ENCODE measurements at regions of chr10 and their contacts with region 1.

Region 1: GRCh38 chr10:5446390-5446926 is 34.1 kb downstream of the NET1 start:
- DNase-seq: peak; percentile 89
- ATAC-seq: peak; percentile 95
- H3K4me3 ChIP-seq: peak overlapping the region; percentile 74 to 96 (median 77)
- H3K27ac ChIP-seq: peak overlapping the region; percentile 71
- H3K4me1 ChIP-seq: peaks cover 18% of the 10 kb centered on the region
- H3K27me3 ChIP-seq: no peaks in the 10 kb centered on the region; a peak in 1 of 5 replicates
- CTCF ChIP-seq: peak; percentile 35; the same call in 1 of the 2 replicates
- EP300 ChIP-seq: peak in 1 of 2 experiments; percentile 28; a peak in 1 of 4 replicates
- POLR2A ChIP-seq: peak; percentile 98 to 100
- RAD21 ChIP-seq: peak; percentile 63

Region 2: DNA sequence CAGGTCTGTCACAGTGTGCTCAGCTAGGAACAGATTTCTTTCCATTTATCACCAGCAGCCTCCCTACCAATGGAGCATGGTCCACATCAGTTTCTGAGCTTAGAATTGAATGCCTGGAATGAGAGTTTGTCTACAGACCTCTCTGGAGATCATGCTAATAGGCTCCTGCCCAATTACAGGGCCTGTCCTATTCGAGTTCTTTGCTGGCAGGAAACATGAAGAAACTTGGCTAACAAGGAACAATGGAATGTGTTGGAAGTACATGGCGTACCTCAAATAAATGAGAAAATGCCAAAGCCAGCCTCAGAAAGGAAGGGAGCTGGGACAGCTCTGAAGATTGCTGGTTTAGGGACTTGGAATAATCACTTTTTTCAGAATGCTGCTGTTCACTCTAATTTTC is 806.5 kb before region 1 on chr10:
- CTCF ChIA-PET with region 1: no interaction called
- POLR2A ChIA-PET with region 1: no interaction called
- in situ Hi-C with region 1: no loop called
- intact Hi-C with region 1: no loop called
- DNase-seq: no peak
- ATAC-seq: no peak
- H3K4me3 ChIP-seq: no peak overlapping the region
- H3K27ac ChIP-seq: no peak overlapping the region
- H3K4me1 ChIP-seq: no peaks in the 10 kb centered on the region
- H3K27me3 ChIP-seq: 0 out of 5 replicates have a peak, but pooled peaks cover 0 to 3% of the 10 kb centered on the region in 2 experiments
- CTCF ChIP-seq: no peak
- EP300 ChIP-seq: no peak
- POLR2A ChIP-seq: no peak
- RAD21 ChIP-seq: no peak

Region 3: GRCh38 chr10:5364890-5365338 is 81.5 kb before region 1 on chr10 and contains the start of gene UCN3:
- CTCF ChIA-PET with region 1: no interaction called
- POLR2A ChIA-PET with region 1: no interaction called
- in situ Hi-C with region 1: no loop called
- intact Hi-C with region 1: no loop called
- DNase-seq: no peak
- ATAC-seq: peak; percentile 71
- H3K4me3 ChIP-seq: peak within 1 kb of the TSS in 2 of 3 experiments; percentile 29 to 57; a peak in 4 of 6 replicates
- H3K27ac ChIP-seq: no peak within 1 kb of the TSS
- H3K4me1 ChIP-seq: peaks cover 24% of the 10 kb centered on the region
- H3K27me3 ChIP-seq: peaks cover 0 to 54% of the 10 kb centered on the region in 2 experiments
- CTCF ChIP-seq: peak; percentile 29; the same call in 1 of the 2 replicates
- EP300 ChIP-seq: no peak
- POLR2A ChIP-seq: no peak
- RAD21 ChIP-seq: no peak
- total RNA-seq, gene UCN3: not detected in 2 replicates

Region 4: GRCh38 chr10:5518138-5518537 is 71.7 kb after region 1 on chr10:
- CTCF ChIA-PET with region 1: no interaction called
- POLR2A ChIA-PET with region 1: interaction called, 18 read pairs
- in situ Hi-C with region 1: no loop called
- intact Hi-C with region 1: loop called (anchors 10 kb)
- DNase-seq: peak; percentile 84
- ATAC-seq: peak; percentile 86
- H3K4me3 ChIP-seq: 0 out of 6 replicates have a peak overlapping the region, but pooled peaks of 1 of the 3 experiments have one; percentile 4
- H3K27ac ChIP-seq: peak overlapping the region; percentile 45
- H3K4me1 ChIP-seq: peaks cover 66% of the 10 kb centered on the region
- H3K27me3 ChIP-seq: no peaks in the 10 kb centered on the region
- CTCF ChIP-seq: no peak
- EP300 ChIP-seq: peak in 1 of 2 experiments; percentile 68; a peak in 2 of 4 replicates
- POLR2A ChIP-seq: no peak
- RAD21 ChIP-seq: no peak

Region 5: DNA sequence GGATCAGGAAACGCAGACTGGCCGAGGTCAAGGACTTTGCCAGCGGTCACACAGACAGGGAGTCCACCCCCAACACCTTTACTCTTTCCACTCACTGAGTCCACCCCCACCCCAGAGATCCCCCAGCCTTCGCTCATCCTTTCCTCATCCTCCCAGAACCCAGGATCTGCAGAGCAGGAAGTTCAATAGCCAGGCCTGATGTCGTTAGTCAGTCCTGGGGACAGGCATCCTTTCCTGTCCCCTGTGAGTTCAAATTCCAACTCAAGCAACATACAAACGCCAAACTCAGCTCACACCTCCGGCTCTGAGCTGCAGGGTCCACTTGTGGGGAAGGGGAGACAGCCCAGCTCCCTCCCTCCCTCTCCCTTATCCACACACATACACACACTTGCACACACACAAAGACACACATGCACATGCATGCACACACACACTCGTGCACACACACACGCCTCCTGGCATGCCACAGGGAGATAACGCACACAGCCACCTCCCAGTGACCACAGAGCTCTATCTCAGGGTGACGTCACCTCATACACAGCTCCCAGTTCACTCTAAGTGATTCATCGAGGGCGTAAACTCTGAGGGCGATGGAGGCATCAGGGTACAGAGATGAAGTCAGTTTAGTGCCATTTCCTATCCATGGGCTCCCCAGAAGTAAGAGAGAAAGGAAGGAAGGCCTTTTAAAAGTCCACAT is 102.2 kb after region 1 on chr10:
- CTCF ChIA-PET with region 1: no interaction called
- POLR2A ChIA-PET with region 1: interaction called, 73 read pairs
- in situ Hi-C with region 1: no loop called
- intact Hi-C with region 1: loop called (anchors 1 kb)
- DNase-seq: peak; percentile 95
- ATAC-seq: peak; percentile 84
- H3K4me3 ChIP-seq: peak overlapping the region; percentile 32 to 69 (median 38)
- H3K27ac ChIP-seq: peak overlapping the region; percentile 97
- H3K4me1 ChIP-seq: peaks cover 96% of the 10 kb centered on the region
- H3K27me3 ChIP-seq: no peaks in the 10 kb centered on the region; a peak in 1 of 5 replicates
- CTCF ChIP-seq: no peak
- EP300 ChIP-seq: peak in 1 of 2 experiments; percentile 13; a peak in 1 of 4 replicates
- POLR2A ChIP-seq: peak in 1 of 2 experiments; percentile 41; a peak in 2 of 4 replicates
- RAD21 ChIP-seq: peak; percentile 33; the same call in 1 of the 2 replicates

Region 6: DNA sequence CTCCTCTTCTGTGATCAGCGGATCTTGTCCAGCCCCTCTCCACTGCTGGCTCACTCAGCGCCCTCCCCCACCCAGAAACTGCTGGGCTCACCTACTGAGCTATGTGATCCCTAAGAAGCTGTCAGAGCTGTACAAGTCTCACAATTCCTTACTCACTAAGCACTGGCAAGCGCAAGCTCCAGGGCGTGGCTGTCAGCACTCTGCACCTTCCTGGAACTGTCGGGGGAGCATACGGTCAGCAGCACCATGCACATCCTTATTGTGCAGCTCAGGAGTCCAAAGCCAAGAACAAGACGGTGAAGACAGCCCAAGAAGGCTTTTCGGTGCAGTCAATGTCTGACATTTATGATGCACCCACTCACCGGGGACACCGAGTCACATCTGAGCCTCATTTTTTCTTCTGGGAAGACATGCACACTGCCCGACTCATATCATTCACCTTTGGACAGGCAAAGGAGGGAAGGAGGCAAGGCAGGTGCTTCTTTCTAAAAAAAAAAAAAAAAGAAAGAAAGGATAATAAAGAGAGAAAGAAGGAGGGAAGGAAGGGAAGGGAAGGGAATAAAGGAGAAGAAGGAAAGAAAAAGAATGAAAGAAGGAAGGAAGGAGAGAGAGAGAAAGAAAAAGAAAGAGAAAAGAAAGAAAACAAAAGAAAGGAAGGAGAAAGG is 163.6 kb after region 1 on chr10:
- CTCF ChIA-PET with region 1: no interaction called
- POLR2A ChIA-PET with region 1: interaction called, 10 read pairs
- in situ Hi-C with region 1: no loop called
- intact Hi-C with region 1: no loop called
- DNase-seq: no peak
- ATAC-seq: no peak
- H3K4me3 ChIP-seq: peak overlapping the region in 1 of 3 experiments; percentile 29; a peak in 2 of 6 replicates
- H3K27ac ChIP-seq: no peak overlapping the region
- H3K4me1 ChIP-seq: peaks cover 83% of the 10 kb centered on the region
- H3K27me3 ChIP-seq: no peaks in the 10 kb centered on the region
- CTCF ChIP-seq: no peak
- EP300 ChIP-seq: no peak
- POLR2A ChIP-seq: no peak
- RAD21 ChIP-seq: no peak

Region 7: GRCh38 chr10:5629303-5630111 is 183.0 kb after region 1 on chr10:
- CTCF ChIA-PET with region 1: interaction called, 3 read pairs
- POLR2A ChIA-PET with region 1: interaction called, 19 read pairs
- in situ Hi-C with region 1: loop called (anchors 5 kb)
- intact Hi-C with region 1: no loop called
- DNase-seq: peak; percentile 61
- ATAC-seq: peak; percentile 69
- H3K4me3 ChIP-seq: peak overlapping the region in 1 of 3 experiments; percentile 1; a peak in 1 of 6 replicates
- H3K27ac ChIP-seq: no peak overlapping the region
- H3K4me1 ChIP-seq: peaks cover 68% of the 10 kb centered on the region
- H3K27me3 ChIP-seq: no peaks in the 10 kb centered on the region; a peak in 1 of 5 replicates
- CTCF ChIP-seq: peak; percentile 86
- EP300 ChIP-seq: no peak
- POLR2A ChIP-seq: no peak
- RAD21 ChIP-seq: peak; percentile 58

Region 8: GRCh38 chr10:5764422-5765297 is 318.2 kb after region 1 on chr10:
- CTCF ChIA-PET with region 1: no interaction called
- POLR2A ChIA-PET with region 1: no interaction called
- in situ Hi-C with region 1: no loop called
- intact Hi-C with region 1: no loop called
- DNase-seq: no peak
- ATAC-seq: no peak
- H3K4me3 ChIP-seq: no peak overlapping the region
- H3K27ac ChIP-seq: no peak overlapping the region
- H3K4me1 ChIP-seq: peaks cover 14% of the 10 kb centered on the region
- H3K27me3 ChIP-seq: no peaks in the 10 kb centered on the region
- CTCF ChIP-seq: peak; percentile 30; the same call in 1 of the 2 replicates
- EP300 ChIP-seq: no peak
- POLR2A ChIP-seq: 0 out of 4 replicates have a peak, but pooled peaks of 1 of the 2 experiments have one; percentile 31
- RAD21 ChIP-seq: no peak

Region 9: GRCh38 chr10:5987747-5988146 is 541.3 kb after region 1 on chr10:
- CTCF ChIA-PET with region 1: no interaction called
- POLR2A ChIA-PET with region 1: no interaction called
- in situ Hi-C with region 1: no loop called
- intact Hi-C with region 1: no loop called
- DNase-seq: no peak
- ATAC-seq: no peak
- H3K4me3 ChIP-seq: no peak overlapping the region
- H3K27ac ChIP-seq: no peak overlapping the region
- H3K4me1 ChIP-seq: no peaks in the 10 kb centered on the region
- H3K27me3 ChIP-seq: peaks cover 1 to 23% of the 10 kb centered on the region in 2 experiments; a peak in 3 of 5 replicates
- CTCF ChIP-seq: no peak
- EP300 ChIP-seq: no peak
- POLR2A ChIP-seq: no peak
- RAD21 ChIP-seq: no peak